Gastrocnemius medialis (tissue), 4 donors: ENCODE measurements at regions of chr12 and their contacts with region 1.

Region 1: GRCh38 chr12:128853575-128854197 is 408 bp downstream of the GLT1D1 start:
- DNase-seq: no peak
- ATAC-seq: peak; percentile 24 to 37
- H3K4me3 ChIP-seq: peak overlapping the region; percentile 36 to 54 (median 47)
- H3K27ac ChIP-seq: no peak overlapping the region
- H3K4me1 ChIP-seq: no peaks in the 10 kb centered on the region
- H3K27me3 ChIP-seq: peaks cover 2 to 6% (median 6%) of the 10 kb centered on the region in 3 donors
- CTCF ChIP-seq: no peak
- POLR2A ChIP-seq: no peak

Region 2: DNA sequence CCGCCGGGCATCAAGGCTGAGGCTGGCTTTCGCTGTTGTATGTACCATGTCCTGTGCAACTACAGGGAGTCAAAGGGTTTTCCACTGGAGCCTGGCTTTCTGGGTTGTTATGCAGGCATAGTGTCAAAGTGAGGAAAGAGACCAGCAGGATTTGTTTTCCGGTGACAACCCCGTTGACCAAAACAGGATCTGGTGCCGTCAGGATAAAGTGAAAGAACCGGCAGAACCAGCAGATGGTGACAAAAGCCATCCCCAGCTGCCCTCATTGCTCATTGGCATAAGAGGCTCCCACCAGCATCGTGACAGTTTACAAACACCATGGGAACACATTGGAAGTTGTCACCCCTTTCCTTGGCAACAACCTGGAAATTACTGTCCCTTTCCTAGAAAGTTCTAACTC is 110.7 kb before region 1 on chr12:
- in situ Hi-C with region 1: no loop called
- intact Hi-C with region 1: no loop called
- DNase-seq: no peak
- ATAC-seq: no peak
- H3K4me3 ChIP-seq: no peak overlapping the region
- H3K27ac ChIP-seq: no peak overlapping the region
- H3K4me1 ChIP-seq: no peaks in the 10 kb centered on the region
- H3K27me3 ChIP-seq: peaks cover 0 to 3% (median 0%) of the 10 kb centered on the region in 3 donors
- CTCF ChIP-seq: no peak
- POLR2A ChIP-seq: no peak

Region 3: GRCh38 chr12:128783129-128783574 is 70.5 kb before region 1 on chr12:
- in situ Hi-C with region 1: no loop called
- intact Hi-C with region 1: loop called (anchors 1 kb)
- DNase-seq: no peak
- ATAC-seq: no peak
- H3K4me3 ChIP-seq: no peak overlapping the region
- H3K27ac ChIP-seq: no peak overlapping the region
- H3K4me1 ChIP-seq: peaks cover 0 to 8% of the 10 kb centered on the region in 2 donors
- H3K27me3 ChIP-seq: no peaks in the 10 kb centered on the region
- CTCF ChIP-seq: no peak
- POLR2A ChIP-seq: no peak

Region 4: GRCh38 chr12:129231491-129231890 is 377.8 kb after region 1 on chr12:
- in situ Hi-C with region 1: no loop called
- intact Hi-C with region 1: no loop called
- DNase-seq: no peak
- ATAC-seq: no peak
- H3K4me3 ChIP-seq: no peak overlapping the region
- H3K27ac ChIP-seq: no peak overlapping the region
- H3K4me1 ChIP-seq: no peaks in the 10 kb centered on the region
- H3K27me3 ChIP-seq: no peaks in the 10 kb centered on the region
- CTCF ChIP-seq: no peak
- POLR2A ChIP-seq: no peak